ENCODE measurements at regions of chr17 and their contacts with region 1.

Region 1: GRCh38 chr17:47970704-47971463 is at the start of gene CDK5RAP3:
- DNase-seq: peak; percentile 100
- H3K4me3 ChIP-seq: peak within 1 kb of the TSS; percentile 53 to 70
- H3K27ac ChIP-seq: peak within 1 kb of the TSS; percentile 61 to 77
- H3K4me1 ChIP-seq: no peaks in the 10 kb centered on the region
- H3K27me3 ChIP-seq: no peaks in the 10 kb centered on the region
- CTCF ChIP-seq: peak; percentile 92 to 100 (median 99)
- POLR2A ChIP-seq: peak; percentile 87
- total RNA-seq, gene CDK5RAP3: 185 to 193 TPM

Region 2: GRCh38 chr17:47862621-47863440 is 108.1 kb before region 1 on chr17:
- intact Hi-C with region 1: no loop called
- DNase-seq: no peak
- H3K4me3 ChIP-seq: no peak overlapping the region
- H3K27ac ChIP-seq: no peak overlapping the region
- H3K4me1 ChIP-seq: no peaks in the 10 kb centered on the region
- H3K27me3 ChIP-seq: peaks cover 5% of the 10 kb centered on the region
- CTCF ChIP-seq: no peak
- POLR2A ChIP-seq: no peak

Region 3: GRCh38 chr17:47895856-47896671 is 74.8 kb before region 1 on chr17 and contains the start of gene SP2:
- intact Hi-C with region 1: loop called (anchors 5 kb)
- DNase-seq: peak; percentile 100
- H3K4me3 ChIP-seq: peak within 1 kb of the TSS; percentile 79 to 87
- H3K27ac ChIP-seq: peak within 1 kb of the TSS; percentile 98 to 100
- H3K4me1 ChIP-seq: no peaks in the 10 kb centered on the region
- H3K27me3 ChIP-seq: no peaks in the 10 kb centered on the region
- CTCF ChIP-seq: peak in 2 of 4 experiments; percentile 35 to 38
- POLR2A ChIP-seq: peak; percentile 38
- total RNA-seq, gene SP2: 15.2 to 15.8 TPM

Region 4: GRCh38 chr17:47949136-47949759 is 21.6 kb before region 1 on chr17:
- intact Hi-C with region 1: loop called (anchors 2 kb)
- DNase-seq: peak; percentile 89
- H3K4me3 ChIP-seq: peak overlapping the region; percentile 13 to 29
- H3K27ac ChIP-seq: peak overlapping the region; percentile 89 to 93
- H3K4me1 ChIP-seq: peaks cover 16% of the 10 kb centered on the region
- H3K27me3 ChIP-seq: no peaks in the 10 kb centered on the region
- CTCF ChIP-seq: peak; percentile 80 to 97 (median 94)
- POLR2A ChIP-seq: no peak

Region 5: DNA sequence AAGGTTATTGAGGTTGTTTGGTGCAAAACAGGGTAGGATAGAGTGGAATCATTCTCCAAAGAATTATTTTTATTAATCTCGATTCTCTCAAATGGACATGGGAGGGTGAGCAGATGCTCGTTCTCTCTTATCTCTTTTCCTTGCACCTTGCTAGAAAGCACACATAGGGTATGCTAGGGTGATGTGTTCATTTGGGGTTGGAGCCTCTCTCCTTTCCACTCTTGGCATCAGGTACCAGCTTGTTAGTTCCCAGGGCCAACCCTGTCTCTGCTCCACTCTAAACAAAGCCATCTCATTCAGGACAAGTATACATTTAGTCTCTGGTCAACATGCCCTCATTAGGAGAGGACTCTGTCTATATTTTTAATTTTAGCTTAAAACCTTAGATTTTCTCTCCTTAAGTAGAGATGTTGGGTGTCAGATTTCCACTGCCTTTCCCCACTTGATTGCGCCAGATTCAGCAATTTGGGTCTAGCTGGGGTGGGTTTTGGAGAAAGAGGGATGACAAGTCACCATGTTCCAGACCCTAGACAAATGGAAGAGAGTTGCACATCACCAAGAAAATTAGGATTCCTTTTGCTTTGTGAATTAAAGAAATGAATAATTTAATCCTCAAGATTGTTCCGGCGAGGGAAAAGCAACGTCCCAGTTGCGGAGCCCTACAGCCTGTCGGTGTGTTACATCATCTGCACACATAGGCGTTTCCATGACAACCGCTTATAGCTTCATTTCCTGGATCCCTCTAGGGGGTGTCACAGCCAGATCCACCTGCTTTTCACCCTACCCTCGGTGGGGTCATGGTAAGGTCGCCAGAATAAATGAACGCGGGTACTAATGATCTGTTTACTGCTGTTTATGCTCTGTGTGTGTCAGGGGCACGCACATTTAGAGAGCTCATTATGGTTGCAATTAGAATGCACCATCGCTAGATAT is 178.2 kb after region 1 on chr17:
- intact Hi-C with region 1: no loop called
- DNase-seq: no peak
- H3K4me3 ChIP-seq: no peak overlapping the region
- H3K27ac ChIP-seq: no peak overlapping the region
- H3K4me1 ChIP-seq: no peaks in the 10 kb centered on the region
- H3K27me3 ChIP-seq: peaks cover 2% of the 10 kb centered on the region
- CTCF ChIP-seq: no peak
- POLR2A ChIP-seq: no peak

Measured in prostate gland (tissue), 2 donors.